IMR-90 (cell line): ENCODE measurements at regions of chr3 and their contacts with region 1.

Region 1: DNA sequence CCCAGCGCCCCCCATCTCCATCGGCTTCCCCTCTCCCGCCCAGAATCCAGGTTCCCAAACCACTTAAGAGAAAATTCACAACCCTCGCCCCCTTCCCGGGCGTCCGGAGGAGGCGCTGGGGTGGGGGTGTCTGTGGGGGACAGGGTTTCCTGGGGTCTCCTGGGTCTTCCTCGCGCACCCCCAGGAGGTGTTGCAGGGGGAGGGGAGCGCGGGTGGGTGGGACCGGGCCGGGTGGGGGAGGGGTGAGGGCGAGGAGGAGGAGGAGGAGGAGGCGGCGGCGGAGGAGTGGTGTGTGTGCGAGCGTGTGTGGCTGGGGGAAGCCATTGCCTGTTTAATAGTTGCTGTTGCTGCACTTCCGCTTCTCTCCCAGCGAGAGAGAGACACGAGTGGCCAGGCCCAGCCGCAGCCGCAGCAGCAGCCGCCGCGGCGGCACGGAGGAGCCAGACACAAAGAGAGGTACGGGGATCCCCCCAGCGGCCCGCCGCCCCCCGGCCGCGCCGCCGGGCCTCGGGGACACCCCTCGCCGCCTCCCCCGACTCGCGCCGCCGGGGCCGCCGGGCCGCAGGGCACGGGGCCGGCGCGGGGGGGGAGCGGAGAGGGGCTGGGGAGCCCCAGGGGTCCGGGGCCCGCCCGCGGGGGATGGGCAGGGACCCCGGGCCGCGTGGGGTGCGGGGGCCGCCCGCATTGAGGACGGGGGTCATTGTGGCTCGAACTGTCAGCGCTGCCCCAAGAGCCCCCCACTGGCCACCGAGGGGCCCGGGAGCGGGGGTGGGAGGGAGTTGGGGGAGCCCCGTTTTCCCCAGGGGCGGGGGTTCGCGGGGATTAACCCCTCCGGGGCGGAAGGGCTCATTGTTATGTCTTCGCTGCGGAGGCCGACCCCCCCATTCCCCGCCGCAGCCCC is at the start of gene UBE2E1:
- DNase-seq: peak; percentile 72
- ATAC-seq: peak; percentile 77
- H3K4me3 ChIP-seq: peak within 1 kb of the TSS; percentile 46
- H3K27ac ChIP-seq: peak within 1 kb of the TSS; percentile 76
- H3K4me1 ChIP-seq: no peaks in the 10 kb centered on the region; the same call in 1 of the 2 replicates
- H3K27me3 ChIP-seq: no peaks in the 10 kb centered on the region
- CTCF ChIP-seq: no peak
- POLR2A ChIP-seq: peak; percentile 67; the same call in 1 of the 2 replicates
- RAD21 ChIP-seq: no peak; the same call in 1 of the 2 replicates
- total RNA-seq, gene UBE2E1: 54.1 and 87.8 TPM in 2 replicates

Region 2: GRCh38 chr3:23183734-23184133 is 622.1 kb before region 1 on chr3:
- CTCF ChIA-PET with region 1: no interaction called
- POLR2A ChIA-PET with region 1: no interaction called
- dilution Hi-C with region 1: no loop called
- in situ Hi-C with region 1: no loop called
- intact Hi-C with region 1: loop called (anchors 2 kb)
- DNase-seq: peak; percentile 60
- ATAC-seq: peak; percentile 92
- H3K4me3 ChIP-seq: no peak overlapping the region
- H3K27ac ChIP-seq: no peak overlapping the region
- H3K4me1 ChIP-seq: no peaks in the 10 kb centered on the region
- H3K27me3 ChIP-seq: peaks cover 16% of the 10 kb centered on the region; the same call in 1 of the 2 replicates
- CTCF ChIP-seq: peak; percentile 67
- POLR2A ChIP-seq: no peak
- RAD21 ChIP-seq: peak; percentile 71

Region 3: DNA sequence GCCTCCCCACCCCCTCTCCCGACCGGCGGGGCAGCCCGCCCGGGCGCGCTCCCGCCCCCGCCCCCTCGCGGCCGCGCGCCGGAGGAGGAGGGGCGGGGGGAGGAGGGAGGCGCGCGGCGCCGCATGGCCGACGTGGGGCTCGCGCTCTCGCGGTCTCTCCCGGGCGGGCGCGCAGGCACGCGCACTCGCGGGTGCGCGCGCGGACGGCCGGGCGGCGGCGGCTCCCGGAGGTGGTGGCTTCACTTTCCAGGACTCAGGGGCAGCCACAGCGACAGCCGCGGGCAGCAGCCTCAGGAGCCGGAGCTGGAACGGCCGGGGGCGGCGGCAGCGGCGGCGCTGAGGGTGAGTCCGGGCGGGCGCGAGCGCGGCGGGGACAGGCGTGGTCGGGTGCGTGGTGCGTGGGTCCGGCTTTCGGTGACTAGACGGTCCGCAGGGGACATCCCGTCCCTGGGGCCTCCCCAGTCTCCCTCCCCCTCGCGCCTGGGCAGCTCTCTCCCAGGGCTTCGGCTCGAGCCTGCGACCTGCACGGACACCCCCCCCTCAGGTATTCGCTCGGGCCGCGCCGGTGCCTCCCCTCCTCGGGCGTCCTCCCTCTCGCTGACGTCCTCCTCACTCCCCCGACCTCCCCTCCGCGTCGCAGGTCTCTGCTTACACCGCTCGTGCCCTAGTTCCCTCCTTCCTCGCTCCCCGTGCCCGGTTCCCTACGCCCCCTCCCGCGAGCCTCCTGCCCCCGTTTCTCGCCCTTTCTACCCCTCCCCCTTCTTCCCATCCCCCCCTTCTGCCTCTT is 602.8 kb before region 1 on chr3 and contains the start of gene UBE2E2:
- CTCF ChIA-PET with region 1: no interaction called
- POLR2A ChIA-PET with region 1: no interaction called
- dilution Hi-C with region 1: no loop called
- in situ Hi-C with region 1: no loop called
- intact Hi-C with region 1: loop called (anchors 2 kb)
- DNase-seq: peak; percentile 66
- ATAC-seq: peak; percentile 81
- H3K4me3 ChIP-seq: peak within 1 kb of the TSS; percentile 91
- H3K27ac ChIP-seq: peak within 1 kb of the TSS; percentile 67
- H3K4me1 ChIP-seq: no peaks in the 10 kb centered on the region; the same call in 1 of the 2 replicates
- H3K27me3 ChIP-seq: peaks cover 11% of the 10 kb centered on the region
- CTCF ChIP-seq: no peak
- POLR2A ChIP-seq: peak; percentile 59; the same call in 1 of the 2 replicates
- RAD21 ChIP-seq: no peak
- total RNA-seq, gene UBE2E2: 18.6 and 18.9 TPM in 2 replicates

Region 4: GRCh38 chr3:23600167-23600871 is 205.6 kb before region 1 on chr3:
- CTCF ChIA-PET with region 1: no interaction called
- POLR2A ChIA-PET with region 1: no interaction called
- dilution Hi-C with region 1: no loop called
- in situ Hi-C with region 1: no loop called
- intact Hi-C with region 1: loop called (anchors 5 kb)
- DNase-seq: peak; percentile 96
- ATAC-seq: peak; percentile 95
- H3K4me3 ChIP-seq: no peak overlapping the region
- H3K27ac ChIP-seq: no peak overlapping the region
- H3K4me1 ChIP-seq: peaks cover 12% of the 10 kb centered on the region
- H3K27me3 ChIP-seq: no peaks in the 10 kb centered on the region
- CTCF ChIP-seq: no peak
- POLR2A ChIP-seq: no peak
- RAD21 ChIP-seq: no peak; the same call in 1 of the 2 replicates

Region 5: GRCh38 chr3:23650371-23651140 is 155.3 kb before region 1 on chr3:
- CTCF ChIA-PET with region 1: no interaction called
- POLR2A ChIA-PET with region 1: no interaction called
- dilution Hi-C with region 1: no loop called
- in situ Hi-C with region 1: no loop called
- intact Hi-C with region 1: loop called (anchors 5 kb)
- DNase-seq: peak; percentile 97
- ATAC-seq: peak; percentile 91
- H3K4me3 ChIP-seq: no peak overlapping the region
- H3K27ac ChIP-seq: peak overlapping the region; percentile 73
- H3K4me1 ChIP-seq: peaks cover 12% of the 10 kb centered on the region
- H3K27me3 ChIP-seq: no peaks in the 10 kb centered on the region
- CTCF ChIP-seq: no peak
- POLR2A ChIP-seq: peak; percentile 50; the same call in 1 of the 2 replicates
- RAD21 ChIP-seq: peak; percentile 33